Dendritic cell treated with granulocyte-macrophage colony-stimulating factor and Interleukin-4, amounts not matched to agents 40 ng/mL and 50 ng/mL, for 4 days (primary cell): ENCODE measurements at regions of chr6 and their contacts with region 1.

Region 1: DNA sequence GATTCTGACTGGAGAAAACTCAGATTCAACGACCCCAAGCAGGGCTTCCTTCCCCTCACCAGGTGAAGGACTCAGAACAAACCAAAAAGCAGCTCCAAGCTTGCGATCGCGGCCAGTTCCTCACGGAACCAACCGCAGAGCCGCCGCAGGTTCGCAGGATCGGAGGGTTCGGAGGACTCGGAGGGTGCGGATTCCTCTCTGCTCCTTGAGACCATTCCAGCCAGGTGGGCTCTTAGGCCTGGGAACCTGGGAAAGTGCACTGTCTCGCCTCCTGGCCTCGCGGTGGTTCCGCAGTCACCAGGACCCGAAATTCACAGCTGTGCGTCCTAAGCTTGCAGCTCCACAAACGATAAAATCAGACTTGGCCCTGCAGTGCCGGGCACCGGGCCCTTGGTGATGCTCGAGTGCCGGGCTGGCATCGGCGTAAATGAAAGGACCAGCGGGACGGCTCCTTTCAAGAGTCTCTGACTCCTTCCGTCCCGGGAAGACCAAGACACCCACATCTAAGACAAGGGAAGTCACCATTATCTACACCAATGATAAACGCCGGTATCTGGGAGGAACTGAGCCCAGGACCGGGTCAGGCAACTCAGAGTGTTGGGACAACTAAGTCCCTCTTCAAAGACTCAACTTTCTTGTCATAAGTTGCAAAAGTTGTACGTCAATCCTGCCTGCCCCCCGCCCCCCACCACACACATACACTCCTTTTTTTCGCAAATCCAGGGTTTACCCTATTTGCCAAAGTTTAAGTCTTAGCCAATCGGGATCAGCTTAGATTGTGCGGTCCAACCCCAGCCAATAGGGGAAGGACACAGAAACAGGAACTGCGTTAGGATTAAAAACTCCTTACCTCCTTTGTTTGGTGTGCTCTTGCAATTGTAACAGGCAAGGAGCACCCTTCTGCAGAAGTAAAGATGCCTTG is 69.8 kb upstream of the PRSS16 start:
- H3K4me3 Mint-ChIP-seq: peak overlapping the region; percentile 85
- H3K27ac Mint-ChIP-seq: peak overlapping the region; percentile 90
- H3K4me1 Mint-ChIP-seq: peaks cover 10% of the 10 kb centered on the region
- H3K27me3 Mint-ChIP-seq: peaks cover 28% of the 10 kb centered on the region

Region 2: GRCh38 chr6:27019651-27020552 is 157.8 kb before region 1 on chr6:
- intact Hi-C with region 1: no loop called
- H3K4me3 Mint-ChIP-seq: peak overlapping the region; percentile 83
- H3K27ac Mint-ChIP-seq: peak overlapping the region; percentile 69
- H3K4me1 Mint-ChIP-seq: peaks cover 16% of the 10 kb centered on the region
- H3K27me3 Mint-ChIP-seq: peaks cover 11% of the 10 kb centered on the region

Region 3: GRCh38 chr6:27161946-27162603 is 15.7 kb before region 1 on chr6:
- intact Hi-C with region 1: no loop called
- H3K4me3 Mint-ChIP-seq: no peak overlapping the region
- H3K27ac Mint-ChIP-seq: no peak overlapping the region
- H3K4me1 Mint-ChIP-seq: peaks cover 21% of the 10 kb centered on the region
- H3K27me3 Mint-ChIP-seq: peaks cover 14% of the 10 kb centered on the region

Region 4: DNA sequence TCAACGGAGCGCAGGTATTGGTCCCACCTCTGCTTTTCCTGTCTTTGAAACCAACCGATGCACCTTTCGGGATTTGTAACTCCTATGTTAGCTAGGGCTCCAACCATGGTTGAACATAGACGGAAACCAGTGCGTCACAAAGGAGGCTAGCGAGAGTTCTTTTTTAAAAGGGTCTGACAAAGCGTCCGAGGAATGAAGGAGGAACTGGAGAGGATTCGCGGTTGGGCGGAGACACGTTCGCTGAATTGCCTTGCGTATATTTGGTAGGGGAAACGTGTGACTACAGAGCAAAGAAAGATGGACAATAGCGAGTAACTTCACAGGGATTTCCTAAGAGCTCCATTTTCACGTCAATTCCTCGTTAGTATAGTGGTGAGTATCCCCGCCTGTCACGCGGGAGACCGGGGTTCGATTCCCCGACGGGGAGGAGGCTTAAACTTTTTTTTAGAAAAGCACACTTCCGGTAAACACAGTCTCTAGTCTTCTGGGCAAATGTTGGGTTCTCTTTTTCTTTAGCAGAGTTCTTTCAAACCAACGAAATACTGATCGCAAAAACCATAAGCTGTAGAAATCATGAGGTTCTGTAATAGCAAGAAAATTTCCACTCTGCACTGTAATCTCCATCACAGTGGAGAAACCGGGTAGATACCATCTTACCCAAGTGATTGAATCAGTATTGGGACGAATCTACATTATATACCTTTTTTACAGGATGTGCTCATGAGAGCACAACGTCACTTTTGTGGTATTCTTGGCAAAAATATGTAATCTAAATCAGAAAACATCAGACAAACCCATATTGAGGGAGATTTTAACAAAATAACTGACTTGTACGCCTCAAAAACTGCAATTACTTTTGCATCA is 301.8 kb after region 1 on chr6:
- intact Hi-C with region 1: loop called (anchors 5 kb)
- H3K4me3 Mint-ChIP-seq: no peak overlapping the region
- H3K27ac Mint-ChIP-seq: no peak overlapping the region
- H3K4me1 Mint-ChIP-seq: no peaks in the 10 kb centered on the region
- H3K27me3 Mint-ChIP-seq: peaks cover 6% of the 10 kb centered on the region

Region 5: DNA sequence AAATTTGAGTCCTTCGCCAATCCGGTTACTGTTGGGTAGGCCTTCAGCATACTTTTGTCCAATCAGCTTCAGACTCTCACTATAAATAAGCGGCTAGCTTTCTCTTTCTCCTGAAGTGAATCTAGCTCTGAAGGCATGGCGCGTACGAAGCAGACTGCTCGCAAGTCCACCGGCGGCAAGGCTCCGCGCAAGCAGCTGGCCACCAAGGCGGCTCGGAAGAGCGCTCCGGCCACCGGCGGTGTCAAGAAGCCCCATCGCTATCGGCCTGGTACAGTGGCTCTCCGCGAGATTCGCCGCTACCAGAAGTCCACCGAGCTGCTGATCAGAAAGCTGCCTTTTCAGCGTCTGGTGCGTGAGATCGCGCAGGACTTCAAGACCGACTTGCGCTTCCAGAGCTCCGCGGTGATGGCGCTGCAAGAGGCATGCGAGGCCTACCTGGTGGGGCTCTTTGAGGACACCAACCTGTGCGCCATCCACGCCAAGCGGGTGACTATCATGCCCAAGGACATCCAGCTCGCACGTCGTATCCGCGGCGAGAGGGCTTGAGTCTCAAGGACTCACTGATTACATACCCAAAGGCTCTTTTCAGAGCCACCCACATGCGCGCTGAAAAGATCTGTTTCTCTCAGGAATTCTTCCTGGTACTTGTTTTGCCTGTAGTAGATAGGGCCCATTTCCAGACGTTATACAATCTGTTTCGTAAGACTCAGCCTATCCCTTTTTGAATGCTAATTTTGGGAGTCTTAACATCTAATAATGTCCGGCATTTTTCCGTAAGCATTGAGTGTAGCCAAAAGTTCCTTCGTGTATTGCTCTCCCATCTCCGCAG is 632.4 kb after region 1 on chr6:
- intact Hi-C with region 1: loop called (anchors 5 kb)
- H3K4me3 Mint-ChIP-seq: peak overlapping the region; percentile 81
- H3K27ac Mint-ChIP-seq: peak overlapping the region; percentile 95
- H3K4me1 Mint-ChIP-seq: peaks cover 27% of the 10 kb centered on the region
- H3K27me3 Mint-ChIP-seq: peaks cover 2% of the 10 kb centered on the region